MCF 10A (cell line): ENCODE measurements at regions of chr1 and their contacts with region 1.

Region 1: DNA sequence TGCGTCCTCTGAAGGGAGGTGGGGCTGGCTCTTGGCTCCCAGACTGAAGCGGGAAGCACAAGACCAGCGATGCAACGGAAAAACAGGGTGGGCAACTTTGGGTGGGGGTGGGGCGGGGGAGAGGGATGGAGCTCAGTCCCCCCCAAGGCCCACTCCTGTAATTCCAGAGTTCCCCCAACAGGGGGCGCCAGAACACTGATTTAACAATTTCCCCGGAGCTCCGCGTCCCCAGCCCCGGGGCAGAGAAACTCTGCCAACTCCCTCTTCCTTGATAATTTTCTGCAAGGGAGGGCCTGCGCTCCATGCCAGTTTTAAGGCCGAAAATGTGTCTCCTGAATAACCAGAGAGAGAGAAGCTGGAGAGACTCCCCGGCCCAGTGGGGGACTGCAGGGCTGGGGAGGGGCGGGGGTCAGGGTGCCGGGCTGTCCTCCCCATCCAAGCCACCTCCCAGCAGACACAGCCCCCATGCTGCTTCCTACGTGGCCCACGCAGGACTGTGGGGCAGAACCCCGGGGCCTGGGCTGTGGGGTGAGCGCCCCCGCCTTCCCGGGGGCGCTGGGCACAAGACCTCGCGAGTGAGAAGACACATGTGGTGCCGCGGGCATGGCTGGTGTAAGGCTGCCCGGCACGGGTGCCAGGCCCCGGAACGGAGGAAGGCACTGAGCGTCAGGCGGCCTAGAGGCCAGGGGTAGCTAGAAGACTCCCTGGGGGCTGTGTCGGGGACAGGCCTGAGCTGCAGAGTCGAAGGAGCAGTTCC is 51.4 kb downstream of the KIF21B start:
- DNase-seq: peak; percentile 80
- H3K4me3 Mint-ChIP-seq: no peak overlapping the region
- H3K27ac Mint-ChIP-seq: no peak overlapping the region
- H3K4me1 Mint-ChIP-seq: peaks cover 14% of the 10 kb centered on the region
- H3K27me3 Mint-ChIP-seq: no peaks in the 10 kb centered on the region
- CTCF ChIP-seq: peak; percentile 100

Region 2: DNA sequence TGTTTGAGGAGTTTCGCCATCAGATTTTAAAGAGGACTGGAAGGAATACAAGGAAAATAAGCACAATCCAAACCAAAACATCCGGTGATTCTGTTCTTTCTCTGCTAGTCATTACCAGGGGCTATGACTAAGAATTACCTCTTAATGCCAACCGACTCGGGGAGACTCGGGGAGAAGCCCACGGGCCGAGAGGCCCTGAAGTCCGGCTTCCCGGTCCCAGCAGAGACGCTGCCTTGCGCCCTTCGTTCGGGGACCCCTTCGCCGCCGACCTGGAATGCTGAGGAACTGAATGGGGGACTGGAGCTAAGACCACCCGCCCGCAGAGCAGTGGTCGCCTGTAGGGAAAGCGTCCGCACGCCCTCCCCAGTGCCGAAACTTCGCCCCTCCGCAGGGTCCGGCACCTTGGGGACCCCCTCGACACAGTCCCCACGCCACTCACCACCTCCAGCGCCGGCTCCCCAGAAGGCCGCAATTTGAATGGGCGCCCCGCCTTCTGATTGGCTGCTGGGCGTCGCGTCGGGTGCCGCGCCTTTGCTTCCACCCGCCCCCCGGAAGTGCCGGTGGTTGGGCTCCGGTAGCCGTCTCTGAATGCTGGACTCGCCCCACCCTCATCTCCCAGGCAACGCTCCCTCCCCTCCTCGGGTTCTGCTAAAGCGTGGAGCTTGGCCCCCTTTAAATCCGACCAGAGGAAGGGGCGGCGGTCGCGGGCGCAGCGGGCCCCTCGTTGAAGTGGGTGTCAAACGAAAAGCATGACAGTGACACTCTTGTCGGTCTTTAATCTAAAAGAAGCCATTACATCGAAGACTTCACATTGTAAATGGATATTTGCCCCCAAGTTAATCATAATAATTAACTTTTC is 351.6 kb before region 1 on chr1 and contains the start of gene KIF14:
- CTCF ChIA-PET with region 1: interaction called, 7 read pairs
- POLR2A ChIA-PET with region 1: no interaction called
- intact Hi-C with region 1: loop called (anchors 5 kb)
- DNase-seq: peak; percentile 99
- H3K4me3 Mint-ChIP-seq: peak within 1 kb of the TSS; percentile 96
- H3K27ac Mint-ChIP-seq: peak within 1 kb of the TSS; percentile 97
- H3K4me1 Mint-ChIP-seq: peaks cover 48% of the 10 kb centered on the region
- H3K27me3 Mint-ChIP-seq: no peaks in the 10 kb centered on the region
- CTCF ChIP-seq: no peak
- total RNA-seq, gene KIF14: 13.4 and 25.5 TPM in 2 replicates

Region 3: DNA sequence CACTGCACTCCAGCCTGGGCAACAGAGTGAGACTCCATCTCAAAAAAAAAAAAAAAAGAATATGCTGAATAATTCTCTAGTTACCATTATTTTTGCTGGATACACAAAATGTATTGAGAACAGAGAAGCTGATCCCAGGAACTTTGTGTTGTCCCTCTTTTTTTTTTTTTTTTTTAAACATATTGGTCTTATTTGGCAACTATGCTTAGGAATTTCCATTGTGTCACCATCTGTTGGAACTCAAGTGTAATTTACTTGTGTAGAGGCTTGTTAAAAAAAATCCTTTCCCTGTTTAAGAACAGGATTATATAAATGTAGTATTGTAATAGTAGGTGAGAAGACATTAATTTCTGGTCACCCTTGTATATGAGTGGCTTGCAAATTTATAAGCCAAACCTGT is 204.8 kb before region 1 on chr1:
- CTCF ChIA-PET with region 1: no interaction called
- POLR2A ChIA-PET with region 1: no interaction called
- intact Hi-C with region 1: no loop called
- DNase-seq: peak; percentile 31
- H3K4me3 Mint-ChIP-seq: no peak overlapping the region
- H3K27ac Mint-ChIP-seq: no peak overlapping the region
- H3K4me1 Mint-ChIP-seq: peaks cover 16% of the 10 kb centered on the region
- H3K27me3 Mint-ChIP-seq: no peaks in the 10 kb centered on the region
- CTCF ChIP-seq: no peak

Region 4: DNA sequence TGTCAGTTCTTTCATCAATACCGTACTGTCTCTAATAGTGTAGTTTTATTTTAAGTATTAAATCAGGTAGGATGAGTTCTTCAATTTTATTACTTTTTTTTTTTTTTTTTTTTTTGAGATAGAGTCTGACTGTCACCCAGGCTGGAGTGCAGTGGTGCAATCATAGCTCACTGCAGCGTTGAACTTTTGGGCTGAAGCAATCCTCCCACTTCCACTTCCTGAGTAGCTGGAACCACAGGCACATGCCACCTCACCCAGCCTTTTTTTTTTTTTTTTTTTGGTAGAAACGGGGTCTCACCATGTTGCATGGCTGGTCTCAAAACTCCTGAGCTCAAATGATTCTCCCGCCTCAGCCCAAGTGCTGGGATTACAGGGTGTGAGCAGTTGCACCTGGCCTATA is 33.2 kb before region 1 on chr1:
- CTCF ChIA-PET with region 1: interaction called, 13 read pairs
- POLR2A ChIA-PET with region 1: no interaction called
- intact Hi-C with region 1: no loop called
- DNase-seq: peak; percentile 48
- H3K4me3 Mint-ChIP-seq: no peak overlapping the region
- H3K27ac Mint-ChIP-seq: no peak overlapping the region
- H3K4me1 Mint-ChIP-seq: no peaks in the 10 kb centered on the region
- H3K27me3 Mint-ChIP-seq: no peaks in the 10 kb centered on the region
- CTCF ChIP-seq: no peak

Region 5: GRCh38 chr1:200999667-201000066 is 27.5 kb after region 1 on chr1:
- CTCF ChIA-PET with region 1: interaction called, 36 read pairs
- POLR2A ChIA-PET with region 1: no interaction called
- intact Hi-C with region 1: no loop called
- DNase-seq: no peak
- H3K4me3 Mint-ChIP-seq: no peak overlapping the region
- H3K27ac Mint-ChIP-seq: no peak overlapping the region
- H3K4me1 Mint-ChIP-seq: no peaks in the 10 kb centered on the region
- H3K27me3 Mint-ChIP-seq: no peaks in the 10 kb centered on the region
- CTCF ChIP-seq: no peak

Region 6: GRCh38 chr1:201042779-201043461 is 70.8 kb after region 1 on chr1:
- CTCF ChIA-PET with region 1: interaction called, 96 read pairs
- POLR2A ChIA-PET with region 1: interaction called, 7 read pairs
- intact Hi-C with region 1: loop called (anchors 1 kb)
- DNase-seq: peak; percentile 89
- H3K4me3 Mint-ChIP-seq: no peak overlapping the region
- H3K27ac Mint-ChIP-seq: no peak overlapping the region
- H3K4me1 Mint-ChIP-seq: no peaks in the 10 kb centered on the region
- H3K27me3 Mint-ChIP-seq: peaks cover 33% of the 10 kb centered on the region
- CTCF ChIP-seq: peak; percentile 98

Region 7: GRCh38 chr1:201119206-201120197 is 147.4 kb after region 1 on chr1:
- CTCF ChIA-PET with region 1: interaction called, 92 read pairs
- POLR2A ChIA-PET with region 1: no interaction called
- intact Hi-C with region 1: loop called (anchors 1 kb)
- DNase-seq: no peak
- H3K4me3 Mint-ChIP-seq: no peak overlapping the region
- H3K27ac Mint-ChIP-seq: no peak overlapping the region
- H3K4me1 Mint-ChIP-seq: peaks cover 9% of the 10 kb centered on the region
- H3K27me3 Mint-ChIP-seq: no peaks in the 10 kb centered on the region
- CTCF ChIP-seq: no peak